Activated T-helper 1 cell treated with anti-CD3 and anti-CD28 coated beads, Interleukin-12 subunit alpha, Interleukin-12 subunit beta, Interleukin-2, Interleukin-4 antibody, amounts not matched to agents 30 ng/mL and 10 ng/mL and 1 ng/mL, durations not matched to agents 14 hours and 24 hours and 36 hours (primary cell): ENCODE measurements at regions of chr2 and their contacts with region 1.

Region 1: GRCh38 chr2:232611551-232612218 is 21.7 kb upstream of the EFHD1 start:
- DNase-seq: peak; percentile 44
- H3K4me3 Mint-ChIP-seq: no peak overlapping the region
- H3K27ac Mint-ChIP-seq: no peak overlapping the region
- H3K4me1 Mint-ChIP-seq: no peaks in the 10 kb centered on the region
- H3K27me3 Mint-ChIP-seq: peaks cover 5% of the 10 kb centered on the region

Region 2: DNA sequence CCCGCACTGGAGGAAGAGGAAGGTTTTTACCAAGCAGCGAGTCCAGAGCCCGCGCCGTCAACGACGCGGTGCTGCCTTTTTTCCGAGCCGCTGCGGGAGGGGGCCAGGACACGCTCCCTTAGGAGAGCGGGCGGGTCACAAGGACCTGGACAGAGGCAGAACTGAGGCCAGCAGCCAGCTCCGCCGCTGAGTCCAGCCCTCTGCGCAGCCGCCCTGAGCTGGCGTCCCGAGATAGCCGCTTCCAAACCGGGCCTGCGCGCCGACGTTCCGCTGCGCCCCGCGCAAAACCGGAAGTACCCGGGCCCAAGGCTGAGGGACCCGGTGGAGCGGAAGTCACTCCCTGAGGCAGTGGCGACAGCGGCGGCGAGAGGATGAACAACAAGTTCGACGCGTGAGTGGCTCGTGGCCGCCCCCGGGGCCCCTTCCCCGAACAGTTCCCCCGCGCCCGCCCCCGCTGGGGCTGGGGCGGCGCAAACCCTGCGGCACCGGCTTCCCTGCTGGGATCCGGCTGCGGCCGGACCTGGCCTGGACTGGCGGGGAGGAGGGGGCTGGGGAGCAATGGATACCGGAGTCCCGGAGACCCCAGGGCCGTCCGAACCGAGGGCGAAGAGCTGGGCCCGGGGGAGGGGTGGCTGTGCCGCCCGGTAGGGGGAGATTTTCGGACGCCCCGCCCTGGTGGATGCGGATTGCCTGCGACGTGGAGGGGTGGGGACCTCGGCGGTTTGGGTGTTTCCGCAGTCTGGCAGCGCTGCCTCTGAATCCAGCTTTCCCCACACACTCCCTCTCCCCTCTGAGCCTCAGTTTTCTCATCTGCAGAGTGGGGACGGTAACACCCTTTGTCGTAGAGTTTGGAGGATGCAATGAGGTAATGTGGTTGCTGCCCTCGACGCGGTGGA is 61.1 kb before region 1 on chr2 and contains the starts of genes EIF4E2 and TIGD1:
- intact Hi-C with region 1: loop called (anchors 5 kb)
- DNase-seq: peak; percentile 90
- H3K4me3 Mint-ChIP-seq: peak within 1 kb of the TSS; percentile 100
- H3K27ac Mint-ChIP-seq: peak within 1 kb of the TSS; percentile 100
- H3K4me1 Mint-ChIP-seq: peaks cover 76% of the 10 kb centered on the region
- H3K27me3 Mint-ChIP-seq: no peaks in the 10 kb centered on the region
- total RNA-seq, gene EIF4E2: 94.3 and 96.2 TPM in 2 replicates
- total RNA-seq, gene TIGD1: 8.4 and 8.9 TPM in 2 replicates

Region 3: GRCh38 chr2:232662262-232663260 is 50.9 kb after region 1 on chr2:
- intact Hi-C with region 1: no loop called
- DNase-seq: no peak
- H3K4me3 Mint-ChIP-seq: no peak overlapping the region
- H3K27ac Mint-ChIP-seq: no peak overlapping the region
- H3K4me1 Mint-ChIP-seq: no peaks in the 10 kb centered on the region
- H3K27me3 Mint-ChIP-seq: peaks cover 2% of the 10 kb centered on the region

Region 4: GRCh38 chr2:232697100-232697865 is 85.6 kb after region 1 on chr2 and contains the start of gene GIGYF2:
- intact Hi-C with region 1: loop called (anchors 1 kb)
- DNase-seq: peak; percentile 90
- H3K4me3 Mint-ChIP-seq: peak within 1 kb of the TSS; percentile 99
- H3K27ac Mint-ChIP-seq: peak within 1 kb of the TSS; percentile 87
- H3K4me1 Mint-ChIP-seq: peaks cover 30% of the 10 kb centered on the region
- H3K27me3 Mint-ChIP-seq: no peaks in the 10 kb centered on the region
- total RNA-seq, gene GIGYF2: 71.1 and 74.6 TPM in 2 replicates

Region 5: GRCh38 chr2:233053928-233054784 is 442.5 kb after region 1 on chr2:
- intact Hi-C with region 1: loop called (anchors 1 kb)
- DNase-seq: peak; percentile 52
- H3K4me3 Mint-ChIP-seq: no peak overlapping the region
- H3K27ac Mint-ChIP-seq: no peak overlapping the region
- H3K4me1 Mint-ChIP-seq: peaks cover 18% of the 10 kb centered on the region
- H3K27me3 Mint-ChIP-seq: peaks cover 25% of the 10 kb centered on the region

Region 6: GRCh38 chr2:233443468-233444183 is 831.9 kb after region 1 on chr2:
- intact Hi-C with region 1: loop called (anchors 5 kb)
- DNase-seq: peak; percentile 67
- H3K4me3 Mint-ChIP-seq: no peak overlapping the region
- H3K27ac Mint-ChIP-seq: peak overlapping the region; percentile 56
- H3K4me1 Mint-ChIP-seq: peaks cover 21% of the 10 kb centered on the region
- H3K27me3 Mint-ChIP-seq: no peaks in the 10 kb centered on the region